ENCODE measurements at regions of chr1 and their contacts with region 1.

Region 1: DNA sequence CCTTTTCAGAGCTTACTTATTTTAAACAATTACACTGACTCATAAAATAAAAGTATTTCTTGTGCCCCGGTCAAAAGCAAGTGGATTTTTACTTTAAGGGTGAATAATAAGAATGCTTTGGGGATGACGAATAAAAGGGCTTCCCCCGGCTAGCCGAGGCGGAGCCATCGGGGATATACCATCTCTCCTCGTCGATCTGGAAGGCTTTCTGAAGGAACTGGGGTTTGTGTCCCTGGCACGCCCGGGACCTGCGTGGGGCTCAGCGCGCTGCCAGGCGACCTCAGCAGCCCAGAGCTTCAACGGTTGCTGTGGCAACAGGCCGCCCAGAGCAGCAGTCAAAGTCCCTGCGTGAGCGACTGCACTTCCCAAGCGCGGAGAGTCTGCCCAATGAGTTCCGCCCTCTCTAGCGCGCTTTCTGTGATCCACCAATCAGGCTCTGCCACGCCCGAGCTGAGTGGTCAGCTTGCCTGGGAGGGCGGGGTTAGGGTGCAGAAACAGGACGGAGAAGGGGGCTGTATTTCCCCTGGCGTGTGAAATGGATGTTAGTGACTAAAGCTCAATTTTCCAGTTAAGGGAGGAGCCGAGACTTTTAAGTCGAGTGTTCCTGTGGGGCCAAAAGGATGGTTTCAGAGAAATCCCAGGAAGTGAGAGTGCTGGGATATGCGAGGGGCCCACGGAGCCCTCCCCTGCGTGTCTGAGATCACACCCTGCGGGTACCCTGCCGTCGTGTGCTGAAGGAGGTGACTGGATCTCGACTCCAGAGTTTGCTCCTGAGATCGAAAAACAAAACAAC is 33.0 kb upstream of the MGST3 start:
- DNase-seq: peak; percentile 90
- ATAC-seq: peak; percentile 98
- H3K4me3 ChIP-seq: peak overlapping the region; percentile 70
- H3K27ac ChIP-seq: peak overlapping the region; percentile 71
- H3K4me1 ChIP-seq: peaks cover 14% of the 10 kb centered on the region
- H3K27me3 ChIP-seq: peaks cover 0 to 8% of the 10 kb centered on the region in 2 experiments; a peak in 1 of 4 replicates
- CTCF ChIP-seq: no peak
- EP300 ChIP-seq: no peak
- POLR2A ChIP-seq: peak; percentile 40; the same call in 1 of the 2 replicates
- RAD21 ChIP-seq: no peak

Region 2: DNA sequence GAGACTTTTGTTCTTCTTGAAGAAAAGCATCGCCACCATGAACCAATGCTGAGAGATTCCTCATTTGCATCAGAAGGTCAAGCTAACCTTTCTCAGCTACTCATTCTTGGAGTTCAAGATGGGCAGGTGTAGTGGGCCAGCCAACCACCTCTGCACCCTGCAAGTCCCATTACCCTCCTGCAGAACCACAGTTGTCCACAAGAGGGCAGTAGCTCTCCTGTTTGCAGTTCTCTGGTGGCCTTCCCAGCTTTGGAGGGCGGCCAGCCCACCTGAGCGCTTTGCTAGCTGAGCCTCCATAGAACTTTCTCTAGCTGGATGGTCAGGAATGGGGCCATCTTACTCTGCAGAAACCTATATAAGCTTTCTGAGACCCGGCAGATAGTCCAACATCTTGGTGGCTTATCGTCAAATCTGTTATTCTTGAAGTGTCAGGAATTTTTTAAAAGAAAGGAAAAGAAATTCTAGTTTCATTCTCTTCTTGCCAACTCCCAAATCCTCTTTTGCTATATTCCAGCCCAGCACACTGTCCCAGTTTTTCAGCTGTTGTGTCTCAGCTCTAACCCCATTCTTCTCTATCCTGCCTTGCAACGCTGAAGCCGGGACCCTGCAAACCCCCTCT is 230.6 kb before region 1 on chr1:
- CTCF ChIA-PET with region 1: interaction called, 42 read pairs
- POLR2A ChIA-PET with region 1: no interaction called
- RAD21 ChIA-PET with region 1: interaction called, 10 read pairs
- SMC1A ChIA-PET with region 1: interaction called, 9 read pairs
- in situ Hi-C with region 1: no loop called
- intact Hi-C with region 1: loop called (anchors 1 kb)
- DNase-seq: peak; percentile 3
- ATAC-seq: peak; percentile 91
- H3K4me3 ChIP-seq: no peak overlapping the region
- H3K27ac ChIP-seq: no peak overlapping the region
- H3K4me1 ChIP-seq: no peaks in the 10 kb centered on the region
- H3K27me3 ChIP-seq: no peaks in the 10 kb centered on the region; a peak in 1 of 4 replicates
- CTCF ChIP-seq: peak; percentile 79 to 97 (median 96)
- EP300 ChIP-seq: no peak
- POLR2A ChIP-seq: no peak
- RAD21 ChIP-seq: peak; percentile 53

Region 3: GRCh38 chr1:165403835-165404482 is 194.1 kb before region 1 on chr1:
- CTCF ChIA-PET with region 1: interaction called, 29 read pairs
- POLR2A ChIA-PET with region 1: no interaction called
- RAD21 ChIA-PET with region 1: interaction called, 4 read pairs
- SMC1A ChIA-PET with region 1: interaction called, 6 read pairs
- in situ Hi-C with region 1: no loop called
- intact Hi-C with region 1: loop called (anchors 1 kb)
- DNase-seq: no peak
- ATAC-seq: peak; percentile 90
- H3K4me3 ChIP-seq: no peak overlapping the region
- H3K27ac ChIP-seq: no peak overlapping the region
- H3K4me1 ChIP-seq: no peaks in the 10 kb centered on the region
- H3K27me3 ChIP-seq: peaks cover 0 to 3% of the 10 kb centered on the region in 2 experiments; a peak in 2 of 4 replicates
- CTCF ChIP-seq: peak; percentile 66 to 71 (median 69); a peak in 5 of 6 replicates
- EP300 ChIP-seq: no peak
- POLR2A ChIP-seq: no peak
- RAD21 ChIP-seq: peak; percentile 55

Region 4: DNA sequence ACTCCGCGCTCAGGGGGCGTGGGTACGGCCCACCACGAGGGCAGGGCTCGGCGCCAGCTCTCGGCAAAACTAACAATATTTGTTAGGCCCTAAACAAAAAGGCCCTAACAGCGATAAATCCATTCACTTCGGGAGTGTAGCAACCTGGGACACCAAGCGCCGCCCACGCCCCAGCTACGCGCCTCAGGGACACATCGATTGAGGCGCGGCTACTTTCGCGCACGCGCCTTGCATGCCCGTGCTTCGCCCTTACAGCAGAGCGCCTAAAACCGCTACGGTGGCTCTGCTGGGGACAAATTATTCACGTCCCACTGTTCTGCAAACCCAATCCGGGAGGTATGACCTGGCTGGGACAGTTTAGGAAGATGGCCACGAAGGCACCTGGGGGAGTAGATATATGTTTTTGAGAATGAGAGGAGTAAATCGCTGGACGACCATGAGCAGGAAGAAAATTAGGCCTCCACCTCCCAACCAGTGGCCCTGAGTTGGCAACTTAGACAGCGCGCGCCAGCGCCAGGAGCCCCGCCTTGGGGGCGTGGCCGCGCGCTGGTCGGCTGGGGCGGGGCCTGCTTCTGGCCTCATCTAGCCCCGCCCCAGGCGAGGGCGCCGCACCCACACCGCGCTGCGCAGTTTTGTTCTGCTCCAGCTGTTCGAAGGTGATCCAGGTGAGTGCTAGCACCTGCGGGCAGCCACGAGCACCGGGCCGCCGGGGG is 32.7 kb after region 1 on chr1 and contains the start of gene MGST3:
- CTCF ChIA-PET with region 1: interaction called, 4 read pairs
- POLR2A ChIA-PET with region 1: interaction called, 3 read pairs
- RAD21 ChIA-PET with region 1: interaction called, 5 read pairs
- SMC1A ChIA-PET with region 1: interaction called, 4 read pairs
- in situ Hi-C with region 1: no loop called
- intact Hi-C with region 1: loop called (anchors 1 kb)
- DNase-seq: peak; percentile 91
- ATAC-seq: peak; percentile 95
- H3K4me3 ChIP-seq: peak within 1 kb of the TSS; percentile 87
- H3K27ac ChIP-seq: peak within 1 kb of the TSS; percentile 92
- H3K4me1 ChIP-seq: peaks cover 20% of the 10 kb centered on the region
- H3K27me3 ChIP-seq: no peaks in the 10 kb centered on the region
- CTCF ChIP-seq: no peak
- EP300 ChIP-seq: 0 out of 4 replicates have a peak, but pooled peaks of 1 of the 2 experiments have one; percentile 24
- POLR2A ChIP-seq: peak; percentile 69
- RAD21 ChIP-seq: no peak
- polyA plus RNA-seq, gene MGST3: 137 to 145 TPM

Region 5: GRCh38 chr1:165717918-165718515 is 119.9 kb after region 1 on chr1:
- CTCF ChIA-PET with region 1: interaction called, 7 read pairs
- POLR2A ChIA-PET with region 1: no interaction called
- RAD21 ChIA-PET with region 1: no interaction called
- SMC1A ChIA-PET with region 1: interaction called, 4 read pairs
- in situ Hi-C with region 1: no loop called
- intact Hi-C with region 1: loop called (anchors 5 kb)
- DNase-seq: no peak
- ATAC-seq: peak; percentile 88
- H3K4me3 ChIP-seq: no peak overlapping the region
- H3K27ac ChIP-seq: no peak overlapping the region
- H3K4me1 ChIP-seq: no peaks in the 10 kb centered on the region
- H3K27me3 ChIP-seq: no peaks in the 10 kb centered on the region
- CTCF ChIP-seq: peak; percentile 73 to 84 (median 82)
- EP300 ChIP-seq: no peak
- POLR2A ChIP-seq: no peak
- RAD21 ChIP-seq: peak; percentile 99

Region 6: GRCh38 chr1:165914136-165914798 is 316.2 kb after region 1 on chr1:
- CTCF ChIA-PET with region 1: interaction called, 98 read pairs
- POLR2A ChIA-PET with region 1: no interaction called
- RAD21 ChIA-PET with region 1: interaction called, 11 read pairs
- SMC1A ChIA-PET with region 1: interaction called, 65 read pairs
- in situ Hi-C with region 1: loop called (anchors 5 kb)
- intact Hi-C with region 1: loop called (anchors 1 kb)
- DNase-seq: peak; percentile 54
- ATAC-seq: peak; percentile 95
- H3K4me3 ChIP-seq: no peak overlapping the region
- H3K27ac ChIP-seq: no peak overlapping the region
- H3K4me1 ChIP-seq: no peaks in the 10 kb centered on the region
- H3K27me3 ChIP-seq: no peaks in the 10 kb centered on the region
- CTCF ChIP-seq: peak; percentile 78 to 97 (median 87); a peak in 5 of 6 replicates
- EP300 ChIP-seq: no peak
- POLR2A ChIP-seq: no peak
- RAD21 ChIP-seq: peak; percentile 99

Measured in GM12878 (cell line).